Activated CD4-positive, alpha-beta T cell treated with anti-CD3 and anti-CD28 coated beads for 36 hours (primary cell): ENCODE measurements at regions of chr14 and their contacts with region 1.

Region 1: DNA sequence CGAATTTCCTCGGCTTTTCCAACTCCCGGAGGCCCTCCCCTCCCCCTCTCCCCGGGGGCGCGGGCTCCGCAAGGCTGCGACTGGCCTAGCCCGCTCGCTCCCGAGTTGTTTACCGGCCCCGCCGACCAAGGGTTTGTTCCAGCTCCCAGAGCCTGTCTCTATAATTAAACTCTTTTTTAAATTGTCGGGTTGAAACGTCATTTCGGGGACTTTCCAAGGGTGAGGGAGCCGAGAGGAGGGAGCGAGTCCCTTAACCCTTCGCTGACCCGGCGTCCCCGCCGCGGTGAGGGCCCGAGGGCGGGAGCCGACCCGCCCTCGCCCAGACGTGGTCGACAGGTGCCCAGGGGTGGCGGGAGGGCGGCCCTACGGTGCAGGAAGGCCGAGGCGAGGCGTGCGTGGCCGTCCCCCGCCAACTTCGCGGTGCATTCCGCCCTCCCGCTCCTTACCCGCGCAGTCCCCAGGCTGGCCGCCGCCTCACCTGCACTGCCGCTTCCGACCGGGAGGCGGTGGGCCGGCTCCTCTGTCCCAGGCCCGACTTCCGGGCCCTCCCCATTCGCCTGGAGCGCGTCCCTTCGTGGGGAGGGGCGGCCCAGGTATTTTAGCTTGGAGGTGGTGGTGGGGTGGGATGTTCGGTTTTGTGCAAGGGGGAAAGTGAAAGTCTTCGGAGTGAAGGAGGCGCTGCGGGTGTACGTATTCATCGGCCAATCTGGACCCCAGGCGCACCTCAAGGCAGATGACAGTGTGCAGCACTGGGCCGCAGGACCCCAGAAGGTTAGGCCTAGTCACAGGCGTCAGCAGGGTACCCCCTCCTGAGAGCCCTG is 2.9 kb upstream of the ZFP36L1 start:
- DNase-seq: peak; percentile 90
- ATAC-seq: peak; percentile 53
- H3K4me3 Mint-ChIP-seq: peak overlapping the region; percentile 90
- H3K27ac Mint-ChIP-seq: peak overlapping the region; percentile 100
- H3K4me1 Mint-ChIP-seq: peaks cover 51% of the 10 kb centered on the region
- H3K27me3 Mint-ChIP-seq: no peaks in the 10 kb centered on the region

Region 2: GRCh38 chr14:67240978-67241414 is 1554.8 kb before region 1 on chr14:
- CTCF ChIA-PET with region 1: no interaction called
- POLR2A ChIA-PET with region 1: no interaction called
- intact Hi-C with region 1: loop called in 1 of 2 experiments (anchors 5 kb)
- DNase-seq: peak; percentile 97
- ATAC-seq: peak; percentile 95
- H3K4me3 Mint-ChIP-seq: peak overlapping the region; percentile 79
- H3K27ac Mint-ChIP-seq: peak overlapping the region; percentile 83
- H3K4me1 Mint-ChIP-seq: peaks cover 21% of the 10 kb centered on the region
- H3K27me3 Mint-ChIP-seq: peaks cover 8% of the 10 kb centered on the region

Region 3: DNA sequence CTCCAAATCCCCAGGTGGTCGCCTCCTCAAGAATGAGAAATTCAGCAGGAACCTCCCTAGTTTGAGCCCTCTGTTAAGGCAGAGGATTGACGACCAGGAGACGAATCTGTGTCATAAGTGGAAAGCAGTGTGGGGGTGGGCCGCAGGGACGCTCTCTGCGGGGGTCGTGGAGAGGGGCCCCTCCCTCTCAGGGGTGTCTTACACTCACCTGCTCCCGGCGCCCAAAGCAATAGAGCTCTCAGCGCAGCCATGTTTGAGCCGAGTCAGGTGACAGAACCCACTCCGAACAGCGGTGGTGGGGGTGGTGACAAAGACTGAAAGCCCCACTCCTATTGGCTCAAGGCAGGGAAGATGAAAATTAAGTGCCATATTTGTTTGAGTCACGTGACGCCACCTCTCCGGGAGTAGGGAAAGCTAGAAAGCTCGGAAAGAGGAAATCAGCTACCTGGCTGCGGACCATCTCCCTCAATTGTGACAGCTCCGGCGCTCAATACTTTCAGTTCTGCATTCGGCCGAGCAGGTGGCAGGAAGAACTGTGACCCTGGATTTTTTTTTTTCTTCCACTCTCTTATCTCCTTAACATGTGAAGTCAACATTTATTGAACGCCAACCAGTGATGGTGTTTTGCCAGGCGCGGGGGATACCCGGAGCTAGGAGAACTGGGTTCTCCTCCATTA is 979.3 kb before region 1 on chr14 and contains the start of gene ZFYVE26:
- CTCF ChIA-PET with region 1: no interaction called
- POLR2A ChIA-PET with region 1: no interaction called
- intact Hi-C with region 1: loop called (anchors 5 kb)
- DNase-seq: peak; percentile 95
- ATAC-seq: peak; percentile 89
- H3K4me3 Mint-ChIP-seq: peak within 1 kb of the TSS; percentile 89
- H3K27ac Mint-ChIP-seq: peak within 1 kb of the TSS; percentile 92
- H3K4me1 Mint-ChIP-seq: peaks cover 45% of the 10 kb centered on the region
- H3K27me3 Mint-ChIP-seq: no peaks in the 10 kb centered on the region
- total RNA-seq, gene ZFYVE26: 13.0 to 14.2 TPM

Region 4: DNA sequence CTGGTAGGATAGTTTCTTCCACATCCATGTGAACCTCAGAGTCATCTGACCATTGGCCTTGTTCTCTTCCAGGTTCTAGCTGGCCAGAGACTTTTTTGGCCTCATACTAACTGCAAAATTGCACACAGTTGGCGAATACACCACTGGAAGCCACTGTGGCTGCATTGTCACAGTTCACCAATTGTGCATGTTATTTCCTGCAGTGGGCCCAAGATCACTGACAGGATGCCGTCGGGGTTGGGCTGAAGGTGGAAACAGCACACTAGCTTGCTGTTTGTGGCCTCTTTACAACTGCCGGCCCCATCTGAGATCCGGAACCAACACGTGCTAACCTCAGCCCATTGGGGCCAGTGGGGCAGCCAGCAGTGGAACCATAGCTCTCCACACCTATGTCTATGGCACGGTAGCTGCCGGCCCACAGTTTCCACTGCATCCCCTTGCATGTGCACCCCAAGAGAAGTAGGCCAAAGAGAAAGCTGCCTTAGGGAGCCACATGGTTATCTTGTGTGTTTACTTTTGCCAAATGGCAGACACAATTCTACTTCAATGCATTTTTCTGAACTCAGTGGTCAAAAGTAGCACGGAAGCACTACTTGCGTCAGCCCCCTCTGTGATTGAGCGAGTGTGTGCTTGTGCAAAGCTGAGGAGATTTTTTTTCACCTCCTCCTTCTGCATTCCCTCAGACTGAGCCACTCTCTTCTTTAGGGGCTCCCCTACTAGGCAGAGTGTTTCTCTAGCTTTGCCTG is 512.3 kb before region 1 on chr14:
- CTCF ChIA-PET with region 1: no interaction called
- POLR2A ChIA-PET with region 1: no interaction called
- intact Hi-C with region 1: loop called (anchors 1 to 10 kb)
- DNase-seq: peak; percentile 66
- ATAC-seq: peak; percentile 28
- H3K4me3 Mint-ChIP-seq: no peak overlapping the region
- H3K27ac Mint-ChIP-seq: peak overlapping the region; percentile 72
- H3K4me1 Mint-ChIP-seq: peaks cover 86% of the 10 kb centered on the region
- H3K27me3 Mint-ChIP-seq: no peaks in the 10 kb centered on the region

Region 5: DNA sequence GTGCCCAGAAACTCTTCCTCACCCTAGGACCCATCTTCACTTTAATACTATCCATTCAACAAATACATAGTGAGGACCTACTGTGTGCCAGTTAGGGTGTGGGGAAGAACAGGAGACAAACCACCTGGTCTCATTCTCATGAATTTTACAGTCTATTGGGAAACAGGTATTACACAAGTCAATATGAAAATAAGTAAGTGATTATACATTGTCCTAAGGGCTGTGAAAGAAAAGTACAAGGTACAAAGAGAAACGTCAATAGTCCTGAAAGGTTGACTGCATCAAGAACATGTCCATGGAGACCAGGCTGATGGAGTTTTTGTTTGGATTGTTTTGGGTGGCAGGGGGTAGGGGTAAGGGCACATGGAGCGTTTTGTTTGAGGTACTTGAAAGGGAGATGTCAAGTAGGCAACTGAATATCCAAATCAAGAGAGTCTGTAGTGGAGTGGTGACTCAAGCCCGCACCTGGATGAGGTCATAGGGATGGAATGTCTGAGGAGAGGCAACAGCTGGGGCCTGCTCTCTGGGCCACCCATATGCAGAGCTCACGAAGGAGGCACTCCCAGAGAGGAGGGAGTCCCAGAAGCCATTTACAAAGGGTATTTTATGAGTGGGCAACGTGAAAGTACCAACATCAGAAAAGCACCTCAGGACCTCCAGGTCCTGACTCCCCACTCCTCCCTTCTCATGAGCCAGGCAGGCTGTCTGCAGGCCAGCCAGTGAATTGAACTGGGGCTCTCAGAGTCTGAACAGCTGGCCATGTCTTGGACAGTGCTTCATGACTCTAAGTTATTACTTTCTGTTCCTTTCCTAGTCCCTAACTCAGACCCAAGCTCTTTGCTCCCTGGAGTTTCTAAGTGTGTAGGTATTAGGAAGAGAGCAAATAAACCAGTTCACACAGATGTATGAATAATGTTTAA is 274.9 kb before region 1 on chr14:
- CTCF ChIA-PET with region 1: no interaction called
- POLR2A ChIA-PET with region 1: no interaction called
- intact Hi-C with region 1: no loop called
- DNase-seq: no peak
- ATAC-seq: peak; percentile 12
- H3K4me3 Mint-ChIP-seq: no peak overlapping the region
- H3K27ac Mint-ChIP-seq: no peak overlapping the region
- H3K4me1 Mint-ChIP-seq: peaks cover 14% of the 10 kb centered on the region
- H3K27me3 Mint-ChIP-seq: no peaks in the 10 kb centered on the region

Region 6: GRCh38 chr14:68780358-68781160 is 15.2 kb before region 1 on chr14:
- CTCF ChIA-PET with region 1: interaction called, 18 read pairs
- POLR2A ChIA-PET with region 1: interaction called, 39 read pairs
- intact Hi-C with region 1: loop called (anchors 1 to 2 kb)
- DNase-seq: peak; percentile 53
- ATAC-seq: peak; percentile 14
- H3K4me3 Mint-ChIP-seq: peak overlapping the region; percentile 61
- H3K27ac Mint-ChIP-seq: peak overlapping the region; percentile 92
- H3K4me1 Mint-ChIP-seq: peaks cover 80% of the 10 kb centered on the region
- H3K27me3 Mint-ChIP-seq: no peaks in the 10 kb centered on the region

Region 7: DNA sequence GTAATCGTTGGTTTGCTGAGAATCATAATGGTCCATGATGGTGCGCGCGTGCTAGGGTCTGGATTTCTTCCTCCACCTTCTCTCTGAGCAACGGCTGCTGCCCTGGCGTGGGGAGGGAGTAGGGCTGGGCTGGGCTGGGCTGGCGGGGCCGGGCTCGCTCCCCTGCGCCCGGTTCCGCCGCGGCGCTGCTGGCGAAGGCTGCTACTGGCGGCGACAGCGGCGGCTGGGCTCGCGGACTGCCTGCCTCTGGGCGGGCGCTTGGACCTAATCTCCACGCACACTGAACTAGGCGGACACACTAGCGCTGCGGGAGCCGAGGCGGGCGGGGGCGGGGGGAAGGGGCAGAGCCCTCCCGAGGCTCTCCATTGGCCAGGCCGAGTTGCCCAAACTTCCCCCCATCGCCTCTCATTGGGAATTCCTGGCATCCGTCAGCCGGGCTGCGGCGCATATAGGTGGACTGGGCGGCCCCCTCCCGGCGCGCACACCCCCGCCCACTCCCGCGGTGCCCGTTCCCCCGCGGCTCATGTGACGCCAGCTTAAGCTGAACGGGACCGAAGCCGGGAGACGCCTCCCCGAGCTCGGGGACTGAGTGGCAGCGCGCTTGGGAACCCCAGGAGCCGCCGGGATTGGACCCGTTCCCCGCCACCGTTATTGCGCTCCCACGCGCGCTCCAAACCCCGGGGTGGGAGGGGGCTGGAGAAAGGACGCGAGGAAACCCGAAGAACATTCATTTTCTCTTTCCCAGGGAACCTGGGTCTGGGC is 183.4 kb after region 1 on chr14 and contains the start of gene ACTN1:
- CTCF ChIA-PET with region 1: no interaction called
- POLR2A ChIA-PET with region 1: no interaction called
- intact Hi-C with region 1: loop called in 1 of 2 experiments (anchors 5 kb)
- DNase-seq: peak; percentile 84
- ATAC-seq: peak; percentile 72
- H3K4me3 Mint-ChIP-seq: peak within 1 kb of the TSS; percentile 79
- H3K27ac Mint-ChIP-seq: peak within 1 kb of the TSS; percentile 88
- H3K4me1 Mint-ChIP-seq: peaks cover 38% of the 10 kb centered on the region
- H3K27me3 Mint-ChIP-seq: peaks cover 2% of the 10 kb centered on the region
- total RNA-seq, gene ACTN1: 92.8 to 146 TPM

Region 8: DNA sequence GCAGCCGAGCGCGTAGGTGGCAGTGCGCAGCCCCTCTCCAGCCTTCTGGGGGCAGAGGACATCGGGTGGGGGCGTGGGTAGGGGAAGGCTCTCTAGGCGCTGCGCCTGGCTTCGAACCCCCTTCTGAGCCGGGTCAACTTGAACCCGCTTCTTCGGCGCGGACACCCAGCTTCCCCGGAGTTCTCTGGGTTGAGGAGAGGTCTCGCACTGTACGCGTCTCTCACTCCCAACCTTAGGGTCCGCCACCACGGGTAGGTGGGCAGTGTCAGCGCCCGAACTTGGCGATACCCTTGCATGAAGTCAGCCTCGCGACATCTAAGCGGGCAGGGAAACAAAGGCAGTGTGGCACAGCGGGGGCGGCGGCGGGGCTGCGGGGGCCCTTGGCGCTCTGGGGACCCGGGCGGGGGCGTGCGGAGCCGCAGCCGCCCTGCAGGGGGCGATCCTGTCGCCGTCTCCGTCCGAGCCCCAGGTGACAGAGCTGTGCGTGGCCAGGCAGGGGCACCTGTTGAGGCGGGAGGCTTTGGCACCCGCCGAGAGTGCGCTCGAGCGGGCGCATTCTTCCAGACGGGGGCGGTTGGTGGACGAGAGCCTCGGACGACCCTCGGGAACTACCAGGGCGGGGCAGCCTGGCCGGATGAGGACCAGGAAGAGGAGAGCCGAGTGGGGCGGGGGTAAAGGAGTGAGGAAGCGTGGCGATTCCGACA is 465.2 kb after region 1 on chr14:
- CTCF ChIA-PET with region 1: no interaction called
- POLR2A ChIA-PET with region 1: no interaction called
- intact Hi-C with region 1: no loop called
- DNase-seq: peak; percentile 74
- ATAC-seq: peak; percentile 88
- H3K4me3 Mint-ChIP-seq: peak overlapping the region; percentile 27
- H3K27ac Mint-ChIP-seq: no peak overlapping the region
- H3K4me1 Mint-ChIP-seq: peaks cover 7% of the 10 kb centered on the region
- H3K27me3 Mint-ChIP-seq: peaks cover 45% of the 10 kb centered on the region

Region 9: GRCh38 chr14:69611201-69612011 is 815.6 kb after region 1 on chr14 and contains the start of gene SUSD6:
- CTCF ChIA-PET with region 1: no interaction called
- POLR2A ChIA-PET with region 1: no interaction called
- intact Hi-C with region 1: loop called in 1 of 2 experiments (anchors 10 kb)
- DNase-seq: peak; percentile 95
- ATAC-seq: peak; percentile 74
- H3K4me3 Mint-ChIP-seq: peak within 1 kb of the TSS; percentile 87
- H3K27ac Mint-ChIP-seq: peak within 1 kb of the TSS; percentile 99
- H3K4me1 Mint-ChIP-seq: peaks cover 48% of the 10 kb centered on the region
- H3K27me3 Mint-ChIP-seq: no peaks in the 10 kb centered on the region
- total RNA-seq, gene SUSD6: 57.9 to 59.3 TPM